ENCODE measurements at regions of chr6 and their contacts with region 1.

Region 1: GRCh38 chr6:109009236-109009961 is 85.2 kb downstream of the SESN1 start:
- DNase-seq: peak; percentile 98

Region 2: DNA sequence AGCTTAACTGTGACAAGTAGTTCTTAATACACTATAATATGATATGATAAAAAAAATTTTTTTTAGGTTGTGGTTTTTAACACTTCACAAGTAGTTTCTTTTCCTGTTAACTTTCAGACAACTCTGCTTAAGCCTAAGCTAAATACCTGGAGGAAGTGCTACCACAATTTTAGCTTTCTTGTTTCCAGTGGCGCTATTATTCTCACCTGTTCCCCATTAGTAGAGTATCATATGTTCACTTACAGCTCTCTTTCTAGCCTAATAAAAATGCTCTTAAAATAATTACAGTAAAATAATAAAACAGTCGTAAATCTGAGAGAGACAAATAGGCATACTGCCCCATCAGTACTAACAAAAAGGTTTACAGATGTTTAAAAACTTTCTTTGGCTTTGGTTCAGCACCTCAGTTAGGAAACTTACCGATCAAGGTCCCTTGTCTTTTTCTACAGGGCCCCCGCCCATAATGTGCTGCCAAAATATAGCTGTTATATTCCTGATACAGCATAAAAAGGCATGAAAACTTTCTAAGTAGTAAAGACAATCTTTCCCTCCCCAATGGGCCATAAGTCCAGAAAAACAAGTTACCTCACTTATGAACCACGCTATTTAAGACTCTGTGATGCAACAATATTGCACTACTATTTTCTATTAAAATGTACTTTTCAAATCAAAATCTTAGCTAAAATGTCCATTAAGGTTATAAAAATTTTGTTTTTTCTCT is 27.3 kb after region 1 on chr6:
- intact Hi-C with region 1: no loop called
- DNase-seq: no peak

Region 3: DNA sequence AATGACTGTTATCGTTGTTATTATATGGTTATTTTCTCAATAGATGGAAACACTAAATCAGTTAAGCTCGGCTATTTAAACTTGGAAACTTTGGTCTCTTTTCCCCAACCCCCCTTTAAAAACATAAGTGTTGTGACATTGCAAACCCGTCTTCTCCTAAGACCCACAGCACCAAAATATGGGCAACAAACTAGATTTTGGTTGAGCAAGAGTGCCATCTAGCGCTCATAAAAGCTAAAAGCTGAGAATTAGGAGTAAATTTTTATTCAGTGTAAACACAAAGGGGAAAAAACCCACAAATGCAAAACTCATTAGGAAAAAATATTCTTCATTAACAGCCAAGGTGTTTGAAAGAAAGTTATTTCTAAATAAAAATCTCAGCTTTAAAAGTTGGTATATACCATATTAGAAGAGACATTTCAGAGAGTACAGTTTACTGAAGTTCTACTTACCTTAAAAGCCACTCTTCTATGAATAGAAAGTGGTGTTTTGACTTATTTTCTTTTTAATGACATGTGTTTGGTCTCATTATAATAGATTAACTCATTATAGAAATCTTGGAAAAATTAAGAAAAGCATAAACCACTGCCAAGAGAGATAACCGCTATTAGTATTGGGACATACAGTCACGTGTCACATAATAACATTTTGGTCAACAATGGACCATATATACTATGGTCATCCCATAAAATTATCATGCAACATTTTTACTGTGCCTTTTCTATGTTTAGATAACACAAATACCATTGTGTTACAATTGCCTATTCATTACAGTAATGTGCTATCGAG is 64.1 kb after region 1 on chr6:
- intact Hi-C with region 1: loop called in 1 of 2 experiments (anchors 10 kb)
- DNase-seq: no peak

Measured in posterior vena cava (tissue), 2 donors.